Psoas muscle (tissue), 8 donors: ENCODE measurements at regions of chr16 and their contacts with region 1.

Region 1: GRCh38 chr16:30650369-30651123 is at the start of gene PRR14:
- DNase-seq: peak; percentile 100
- ATAC-seq: peak; percentile 89 to 91 (median 90)
- H3K4me3 ChIP-seq: peak within 1 kb of the TSS; percentile 74
- H3K27ac ChIP-seq: peak within 1 kb of the TSS; percentile 92
- H3K4me1 ChIP-seq: peaks cover 12% of the 10 kb centered on the region
- H3K27me3 ChIP-seq: no peaks in the 10 kb centered on the region
- CTCF ChIP-seq: peak; percentile 32
- total RNA-seq, gene PRR14: 13.4 to 26.4 (median 15.9) TPM

Region 2: DNA sequence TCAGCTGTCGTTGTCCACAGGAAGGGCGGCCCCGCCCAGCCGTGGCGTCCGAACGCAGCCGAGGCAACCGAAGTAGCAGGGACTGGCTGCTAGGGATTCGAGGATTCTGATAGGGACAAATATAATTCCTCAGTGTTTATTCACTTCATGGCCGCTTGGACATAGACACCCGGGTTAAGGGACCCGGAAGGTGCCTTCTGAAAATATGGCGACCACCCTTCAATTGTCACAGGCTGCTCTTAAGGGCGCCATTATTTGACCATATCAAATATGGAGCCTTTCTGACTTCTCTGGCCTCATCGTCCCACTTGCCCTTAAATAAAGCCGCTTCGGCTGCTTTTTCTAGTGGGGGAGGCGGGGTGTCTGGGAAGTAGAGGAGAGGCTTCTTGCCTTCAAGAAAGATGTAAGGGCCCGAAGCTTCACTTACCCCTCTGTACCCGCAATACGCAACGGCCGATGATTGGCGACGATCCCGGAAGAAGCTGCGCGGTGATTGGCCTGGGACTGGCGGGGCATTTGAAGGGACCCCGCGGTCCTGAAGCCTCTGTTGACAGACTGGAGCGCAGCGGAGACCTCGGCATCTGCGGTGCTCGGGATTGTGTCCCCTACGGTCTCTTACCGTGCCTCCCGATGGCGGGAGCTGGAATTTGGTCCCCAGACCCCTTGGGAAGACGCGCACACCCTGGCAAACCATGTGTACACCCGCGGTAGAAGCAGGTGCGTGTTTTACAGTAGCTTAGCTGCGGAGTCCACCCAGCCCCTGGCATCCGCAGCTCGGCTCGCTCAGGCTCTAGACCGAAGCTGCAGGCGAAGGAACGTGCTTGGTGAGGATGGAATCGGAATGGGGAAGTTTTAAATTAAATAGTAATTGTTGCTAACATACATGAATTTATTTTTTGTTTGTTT is 78.6 kb before region 1 on chr16 and contains the start of gene ZNF688:
- intact Hi-C with region 1: loop called in 1 of 2 experiments (anchors 5 kb)
- DNase-seq: peak; percentile 96 to 98
- ATAC-seq: peak; percentile 88 to 90 (median 89)
- H3K4me3 ChIP-seq: peak within 1 kb of the TSS; percentile 91
- H3K27ac ChIP-seq: peak within 1 kb of the TSS; percentile 97
- H3K4me1 ChIP-seq: peaks cover 16% of the 10 kb centered on the region
- H3K27me3 ChIP-seq: no peaks in the 10 kb centered on the region
- CTCF ChIP-seq: no peak
- total RNA-seq, gene ZNF688: 11.7 to 21.2 (median 16.5) TPM

Region 3: GRCh38 chr16:30628627-30629540 is 21.7 kb before region 1 on chr16:
- intact Hi-C with region 1: loop called in 1 of 2 experiments (anchors 2 kb)
- DNase-seq: peak; percentile 88 to 92
- ATAC-seq: peak; percentile 84 to 97 (median 90)
- H3K4me3 ChIP-seq: peak overlapping the region; percentile 54
- H3K27ac ChIP-seq: peak overlapping the region; percentile 67
- H3K4me1 ChIP-seq: no peaks in the 10 kb centered on the region
- H3K27me3 ChIP-seq: no peaks in the 10 kb centered on the region
- CTCF ChIP-seq: peak; percentile 92

Region 4: DNA sequence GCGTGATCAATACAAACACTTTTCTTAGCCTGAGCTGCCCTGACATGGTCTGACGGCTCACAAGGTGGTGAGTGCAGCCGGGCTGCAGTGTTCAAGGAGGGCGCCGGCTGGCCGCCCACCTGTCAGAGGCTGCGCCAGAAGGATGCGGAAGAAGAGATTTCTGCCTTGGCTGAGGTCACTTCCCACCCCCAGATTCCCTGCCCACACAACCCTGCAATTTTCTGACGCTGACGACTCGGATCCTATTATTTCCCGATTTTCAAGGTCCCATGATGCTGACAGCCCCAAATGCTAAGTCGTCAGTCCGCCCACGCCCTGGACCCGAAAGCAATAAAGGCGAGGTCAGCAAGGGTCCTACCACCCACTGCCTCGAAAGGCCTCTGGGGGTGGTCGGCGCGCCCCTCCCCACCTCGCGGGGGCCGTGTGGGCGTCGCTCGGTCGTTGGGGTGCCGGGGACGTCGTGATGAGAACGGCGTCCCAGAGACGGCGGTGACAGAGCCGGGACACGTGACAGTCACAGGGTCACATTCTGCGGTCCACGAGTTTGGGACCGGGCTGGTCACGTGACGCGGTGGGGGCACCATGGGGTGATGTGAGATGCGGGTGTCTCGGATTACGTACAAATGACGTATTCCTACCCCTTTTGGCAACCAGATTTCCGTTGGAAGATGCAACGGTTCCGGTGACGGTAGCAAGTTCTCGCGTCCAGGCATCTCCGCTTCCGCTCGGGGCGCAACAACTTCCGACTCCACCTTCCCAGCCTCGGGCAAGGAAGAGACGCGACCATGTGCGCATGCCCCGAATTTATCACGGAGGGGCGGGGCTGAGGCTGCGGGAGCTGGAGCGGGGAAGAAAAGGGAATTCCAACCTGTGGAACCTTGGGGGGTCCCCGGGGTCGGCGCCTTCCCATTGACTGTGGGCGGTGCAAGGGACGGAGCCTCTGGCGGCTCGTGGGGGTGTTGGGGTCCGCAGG is 382.5 kb after region 1 on chr16 and contains the start of gene STX4:
- intact Hi-C with region 1: no loop called
- DNase-seq: peak; percentile 98 to 99
- ATAC-seq: peak; percentile 91 to 96 (median 94)
- H3K4me3 ChIP-seq: peak within 1 kb of the TSS; percentile 85
- H3K27ac ChIP-seq: peak within 1 kb of the TSS; percentile 96
- H3K4me1 ChIP-seq: peaks cover 10% of the 10 kb centered on the region
- H3K27me3 ChIP-seq: no peaks in the 10 kb centered on the region
- CTCF ChIP-seq: no peak
- total RNA-seq, gene STX4: 47.6 to 57.8 (median 51.6) TPM